PC-3 (cell line): ENCODE measurements at regions of chr7 and their contacts with region 1.

Region 1: DNA sequence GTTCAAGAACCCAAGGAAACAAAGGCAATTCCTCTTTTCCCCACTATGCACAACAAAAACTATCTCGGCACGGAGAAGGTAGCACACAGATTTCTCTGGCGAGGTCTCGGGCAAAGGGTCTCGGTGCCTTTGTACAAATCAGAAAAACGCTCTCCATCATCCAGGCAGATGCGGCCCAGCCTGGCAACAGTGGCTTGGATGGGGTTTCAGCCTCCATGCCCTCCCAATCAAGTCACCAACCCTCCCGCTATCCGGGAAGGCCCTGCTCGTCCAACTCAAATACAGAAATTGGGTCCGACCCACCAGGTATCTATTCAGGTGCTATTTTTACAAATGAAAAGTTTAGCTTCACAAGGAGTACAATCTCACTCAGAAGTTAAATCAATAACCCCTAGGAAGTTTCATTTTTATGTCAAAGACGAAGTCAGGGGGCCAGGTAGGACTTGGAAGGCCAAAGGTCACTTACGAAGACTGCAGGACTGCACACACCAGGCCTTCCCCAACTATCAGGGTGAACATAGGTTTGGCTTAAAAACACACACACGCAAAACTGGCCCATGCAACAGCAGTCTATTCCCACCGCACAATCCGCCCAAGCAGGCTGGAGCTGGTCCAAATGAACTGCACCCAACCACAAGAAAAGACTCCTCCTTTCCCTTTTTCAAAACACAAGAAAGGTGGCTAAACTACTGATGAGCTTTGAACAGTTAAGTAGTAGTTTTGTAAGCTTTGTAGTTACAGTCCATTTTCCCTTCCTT is 43.0 kb downstream of the GNA12 start:
- DNase-seq: peak; percentile 58
- ATAC-seq: no peak
- H3K4me3 ChIP-seq: peak overlapping the region; percentile 56
- H3K27ac ChIP-seq: peak overlapping the region; percentile 92
- H3K4me1 ChIP-seq: peaks cover 41% of the 10 kb centered on the region
- H3K27me3 ChIP-seq: no peaks in the 10 kb centered on the region
- CTCF ChIP-seq: no peak

Region 2: GRCh38 chr7:2771274-2771731 is 29.8 kb before region 1 on chr7:
- CTCF ChIA-PET with region 1: interaction called, 4 read pairs
- POLR2A ChIA-PET with region 1: no interaction called
- intact Hi-C with region 1: loop called (anchors 1 kb)
- DNase-seq: no peak
- ATAC-seq: no peak
- H3K4me3 ChIP-seq: no peak overlapping the region
- H3K27ac ChIP-seq: no peak overlapping the region
- H3K4me1 ChIP-seq: peaks cover 40% of the 10 kb centered on the region
- H3K27me3 ChIP-seq: no peaks in the 10 kb centered on the region
- CTCF ChIP-seq: no peak

Region 3: GRCh38 chr7:2844165-2844898 is 43.2 kb after region 1 on chr7 and contains the start of gene GNA12:
- CTCF ChIA-PET with region 1: no interaction called
- POLR2A ChIA-PET with region 1: no interaction called
- intact Hi-C with region 1: loop called (anchors 5 kb)
- DNase-seq: peak; percentile 99
- ATAC-seq: peak; percentile 94
- H3K4me3 ChIP-seq: peak within 1 kb of the TSS; percentile 77
- H3K27ac ChIP-seq: no peak within 1 kb of the TSS
- H3K4me1 ChIP-seq: peaks cover 18% of the 10 kb centered on the region
- H3K27me3 ChIP-seq: no peaks in the 10 kb centered on the region
- CTCF ChIP-seq: no peak
- total RNA-seq, gene GNA12: 15.0 and 26.8 TPM in 2 replicates